B cell (primary cell): ENCODE measurements at regions of chr16 and their contacts with region 1.

Region 1: GRCh38 chr16:28211712-28212534 is at the start of gene XPO6:
- DNase-seq: peak; percentile 98
- ATAC-seq: peak; percentile 93
- H3K4me3 ChIP-seq: peak within 1 kb of the TSS; percentile 71 to 92 (median 82)
- H3K4me3 Mint-ChIP-seq: peak within 1 kb of the TSS; percentile 97
- H3K27ac ChIP-seq: peak within 1 kb of the TSS; percentile 60 to 74
- H3K27ac Mint-ChIP-seq: peak within 1 kb of the TSS; percentile 97
- H3K4me1 ChIP-seq: peaks cover 29 to 36% of the 10 kb centered on the region in 2 donors
- H3K4me1 Mint-ChIP-seq: peaks cover 31% of the 10 kb centered on the region
- H3K27me3 ChIP-seq: no peaks in the 10 kb centered on the region
- H3K27me3 Mint-ChIP-seq: no peaks in the 10 kb centered on the region
- CTCF ChIP-seq: no peak
- total RNA-seq, gene XPO6: 259 and 271 TPM in 2 replicates

Region 2: DNA sequence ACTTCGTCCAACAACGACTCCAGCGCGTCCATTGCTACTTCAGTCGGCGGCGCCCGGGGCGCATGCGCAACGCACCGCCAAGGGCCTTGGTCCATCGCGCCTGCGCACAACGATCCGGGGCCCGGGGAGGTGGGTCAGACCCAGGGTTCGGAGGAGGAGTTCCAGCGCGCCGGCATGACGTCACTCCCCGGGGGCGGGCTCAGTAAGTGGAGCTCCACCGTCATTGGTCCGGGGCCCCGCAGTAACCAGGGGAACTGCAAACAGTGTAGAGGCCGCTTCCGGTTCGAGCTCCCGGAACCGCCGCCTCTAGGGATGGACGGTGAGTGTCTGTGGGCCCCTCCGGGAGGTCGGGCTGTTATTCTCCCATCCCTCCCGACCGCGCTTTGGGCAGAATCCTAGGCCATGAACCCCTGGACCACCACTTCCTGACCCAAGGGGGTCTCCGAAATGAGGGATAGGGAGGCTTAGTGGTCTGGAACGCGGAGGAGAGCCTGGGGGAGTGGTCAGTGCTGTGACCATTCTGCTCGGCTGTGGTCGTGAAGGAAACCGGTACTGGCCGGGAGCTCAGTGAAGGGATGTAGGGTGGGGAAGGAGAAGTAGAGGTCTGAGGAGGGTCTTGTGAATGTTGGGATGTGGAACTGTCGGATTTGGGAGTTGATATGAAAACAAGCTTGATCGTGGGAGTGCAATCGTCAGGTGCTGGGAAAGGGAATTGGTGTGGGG is 661.9 kb before region 1 on chr16 and contains the starts of genes GTF3C1 and KATNIP:
- CTCF ChIA-PET with region 1: no interaction called
- POLR2A ChIA-PET with region 1: no interaction called
- intact Hi-C with region 1: loop called (anchors 10 kb)
- DNase-seq: peak; percentile 100
- ATAC-seq: peak; percentile 100
- H3K4me3 ChIP-seq: peak within 1 kb of the TSS; percentile 82 to 98 (median 95)
- H3K4me3 Mint-ChIP-seq: peak within 1 kb of the TSS; percentile 99
- H3K27ac ChIP-seq: peak within 1 kb of the TSS; percentile 80 to 99
- H3K27ac Mint-ChIP-seq: peak within 1 kb of the TSS; percentile 97
- H3K4me1 ChIP-seq: peaks cover 13 to 22% of the 10 kb centered on the region in 2 donors
- H3K4me1 Mint-ChIP-seq: peaks cover 33% of the 10 kb centered on the region
- H3K27me3 ChIP-seq: no peaks in the 10 kb centered on the region
- H3K27me3 Mint-ChIP-seq: no peaks in the 10 kb centered on the region
- CTCF ChIP-seq: no peak
- total RNA-seq, gene GTF3C1: 49.6 and 64.1 TPM in 2 replicates
- total RNA-seq, gene KATNIP: 49.9 and 56.0 TPM in 2 replicates

Region 3: DNA sequence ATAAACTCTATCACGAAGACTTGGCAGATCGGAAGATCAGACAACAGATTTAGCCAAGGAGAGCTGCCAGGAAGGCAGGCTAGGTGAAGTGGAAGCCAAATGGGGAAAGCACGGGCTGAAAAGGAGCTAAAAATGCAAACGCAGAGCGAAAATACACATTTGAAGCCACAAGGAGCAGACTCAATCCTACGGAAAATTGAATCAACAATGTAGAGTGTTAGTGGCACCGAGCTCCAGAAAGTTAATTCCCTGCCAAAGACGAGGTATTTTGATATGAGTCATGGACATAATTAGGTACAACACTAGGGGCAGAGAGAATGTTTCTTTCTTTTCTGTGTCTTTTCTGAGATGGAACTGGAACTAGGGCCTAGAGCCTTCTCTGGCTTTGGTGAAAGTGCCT is 169.1 kb before region 1 on chr16:
- CTCF ChIA-PET with region 1: no interaction called
- POLR2A ChIA-PET with region 1: no interaction called
- intact Hi-C with region 1: no loop called
- DNase-seq: no peak
- ATAC-seq: no peak
- H3K4me3 ChIP-seq: no peak overlapping the region
- H3K4me3 Mint-ChIP-seq: no peak overlapping the region
- H3K27ac ChIP-seq: no peak overlapping the region
- H3K27ac Mint-ChIP-seq: no peak overlapping the region
- H3K4me1 ChIP-seq: no peaks in the 10 kb centered on the region
- H3K4me1 Mint-ChIP-seq: no peaks in the 10 kb centered on the region
- H3K27me3 ChIP-seq: no peaks in the 10 kb centered on the region
- H3K27me3 Mint-ChIP-seq: peaks cover 25% of the 10 kb centered on the region
- CTCF ChIP-seq: no peak

Region 4: GRCh38 chr16:28172336-28172735 is 39.6 kb before region 1 on chr16:
- CTCF ChIA-PET with region 1: interaction called, 3 read pairs
- POLR2A ChIA-PET with region 1: no interaction called
- intact Hi-C with region 1: loop called (anchors 5 kb)
- DNase-seq: no peak
- ATAC-seq: no peak
- H3K4me3 ChIP-seq: no peak overlapping the region
- H3K4me3 Mint-ChIP-seq: no peak overlapping the region
- H3K27ac ChIP-seq: peak overlapping the region in 1 of 2 donors; percentile 3
- H3K27ac Mint-ChIP-seq: no peak overlapping the region
- H3K4me1 ChIP-seq: peaks cover 0 to 8% of the 10 kb centered on the region in 2 donors
- H3K4me1 Mint-ChIP-seq: peaks cover 40% of the 10 kb centered on the region
- H3K27me3 ChIP-seq: no peaks in the 10 kb centered on the region
- H3K27me3 Mint-ChIP-seq: no peaks in the 10 kb centered on the region
- CTCF ChIP-seq: no peak

Region 5: DNA sequence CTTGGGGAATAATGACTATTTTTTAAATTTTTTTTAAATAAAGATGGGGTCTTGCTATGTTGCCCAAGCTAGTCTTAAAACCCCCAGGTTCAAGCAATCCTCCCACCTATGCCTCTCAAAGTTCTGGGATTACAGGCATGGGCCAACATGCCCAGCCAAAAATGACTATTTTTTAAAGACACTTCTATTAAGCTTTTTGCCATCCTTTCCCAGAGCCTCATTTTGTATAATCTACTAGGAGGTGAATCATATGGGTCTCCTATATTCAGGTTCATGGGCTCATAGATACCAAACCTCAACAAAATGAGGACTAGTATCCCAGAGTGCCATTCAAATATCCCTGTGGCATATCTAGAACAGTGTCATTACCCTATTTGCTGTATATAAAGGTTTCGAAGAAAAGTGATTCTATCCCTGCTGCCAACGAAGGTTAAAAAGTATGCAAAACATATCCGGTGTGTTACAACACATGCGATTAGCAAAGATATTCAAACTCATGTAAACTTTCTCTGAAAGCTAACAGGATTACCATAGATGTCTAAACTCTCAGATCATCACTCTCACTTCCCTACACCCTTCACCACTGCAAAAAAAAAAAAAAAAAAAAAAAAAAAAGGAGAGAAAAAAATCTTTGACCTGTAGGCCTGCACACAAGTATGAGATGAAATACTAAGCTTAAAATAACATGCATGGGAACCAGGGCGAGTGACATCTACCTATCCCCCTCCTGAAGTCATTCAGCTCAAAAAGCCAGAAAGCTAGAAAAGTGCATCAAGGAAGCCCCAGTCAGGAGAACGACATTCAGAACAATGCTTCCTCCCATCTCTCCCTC is 23.6 kb before region 1 on chr16:
- CTCF ChIA-PET with region 1: interaction called, 13 read pairs
- POLR2A ChIA-PET with region 1: interaction called, 25 read pairs
- intact Hi-C with region 1: loop called (anchors 1 kb)
- DNase-seq: peak; percentile 82
- ATAC-seq: peak; percentile 71
- H3K4me3 ChIP-seq: peak overlapping the region; percentile 1 to 63 (median 41)
- H3K4me3 Mint-ChIP-seq: peak overlapping the region; percentile 76
- H3K27ac ChIP-seq: peak overlapping the region; percentile 92 to 93
- H3K27ac Mint-ChIP-seq: peak overlapping the region; percentile 86
- H3K4me1 ChIP-seq: peaks cover 76 to 82% of the 10 kb centered on the region in 2 donors
- H3K4me1 Mint-ChIP-seq: peaks cover 84% of the 10 kb centered on the region
- H3K27me3 ChIP-seq: no peaks in the 10 kb centered on the region
- H3K27me3 Mint-ChIP-seq: no peaks in the 10 kb centered on the region
- CTCF ChIP-seq: no peak

Region 6: DNA sequence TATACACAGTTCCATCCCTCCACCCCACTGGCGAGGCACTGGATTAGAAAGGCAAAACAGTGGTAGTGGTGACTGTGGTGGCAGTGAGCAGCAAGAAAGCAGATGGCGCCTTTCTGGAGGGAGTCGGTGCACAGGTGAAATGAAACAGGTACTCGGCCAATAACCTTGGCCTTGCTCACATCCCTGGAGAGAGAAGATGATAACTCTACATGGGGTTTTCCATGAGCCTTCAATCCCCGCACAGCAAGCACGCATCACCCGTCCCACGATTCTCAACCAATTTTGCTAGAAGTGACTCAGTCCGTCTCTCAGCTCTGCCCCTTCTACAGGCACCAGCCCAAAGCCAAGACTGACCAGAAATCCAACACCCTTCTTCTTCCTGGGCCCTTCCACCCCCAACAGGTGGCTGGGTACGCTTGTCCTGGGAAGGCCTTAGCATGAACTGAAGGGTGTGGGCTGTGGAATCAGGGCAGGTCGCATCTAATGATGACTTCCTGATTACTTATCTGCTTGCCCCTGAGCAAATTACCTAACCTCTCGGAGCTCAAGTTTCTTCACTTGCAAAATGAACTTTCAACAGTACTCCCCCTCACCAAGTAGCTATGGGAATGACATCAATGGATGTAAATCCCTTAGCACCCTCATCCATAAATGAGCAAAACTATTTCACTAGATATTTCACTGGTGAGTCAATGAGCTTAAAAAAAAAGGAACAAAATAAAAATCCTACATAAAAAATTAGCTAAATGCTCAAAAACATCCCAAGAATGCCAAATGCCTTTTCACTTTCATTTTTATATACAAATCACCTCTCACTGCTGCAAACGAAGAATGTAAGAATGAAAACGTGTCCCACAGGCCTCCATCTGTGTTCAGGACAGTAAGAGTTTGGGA is 18.1 kb before region 1 on chr16:
- CTCF ChIA-PET with region 1: interaction called, 20 read pairs
- POLR2A ChIA-PET with region 1: interaction called, 25 read pairs
- intact Hi-C with region 1: loop called (anchors 1 kb)
- DNase-seq: no peak
- ATAC-seq: no peak
- H3K4me3 ChIP-seq: peak overlapping the region in 4 of 5 experiments; percentile 6 to 66 (median 28)
- H3K4me3 Mint-ChIP-seq: peak overlapping the region; percentile 87
- H3K27ac ChIP-seq: peak overlapping the region; percentile 86 to 92
- H3K27ac Mint-ChIP-seq: peak overlapping the region; percentile 96
- H3K4me1 ChIP-seq: peaks cover 66 to 76% of the 10 kb centered on the region in 2 donors
- H3K4me1 Mint-ChIP-seq: peaks cover 78% of the 10 kb centered on the region
- H3K27me3 ChIP-seq: no peaks in the 10 kb centered on the region
- H3K27me3 Mint-ChIP-seq: no peaks in the 10 kb centered on the region
- CTCF ChIP-seq: no peak

Region 7: GRCh38 chr16:28291873-28292660 is 80.1 kb after region 1 on chr16 and contains the start of gene SBK1:
- CTCF ChIA-PET with region 1: no interaction called
- POLR2A ChIA-PET with region 1: interaction called, 3 read pairs
- intact Hi-C with region 1: loop called (anchors 1 kb)
- DNase-seq: peak; percentile 92
- ATAC-seq: peak; percentile 97
- H3K4me3 ChIP-seq: peak within 1 kb of the TSS; percentile 44 to 84 (median 65)
- H3K4me3 Mint-ChIP-seq: peak within 1 kb of the TSS; percentile 88
- H3K27ac ChIP-seq: peak within 1 kb of the TSS; percentile 11 to 52
- H3K27ac Mint-ChIP-seq: peak within 1 kb of the TSS; percentile 77
- H3K4me1 ChIP-seq: peaks cover 15 to 22% of the 10 kb centered on the region in 2 donors
- H3K4me1 Mint-ChIP-seq: peaks cover 15% of the 10 kb centered on the region
- H3K27me3 ChIP-seq: peaks cover 0 to 21% (median 10%) of the 10 kb centered on the region in 4 experiments
- H3K27me3 Mint-ChIP-seq: peaks cover 8% of the 10 kb centered on the region
- CTCF ChIP-seq: no peak
- total RNA-seq, gene SBK1: 1.2 and 1.3 TPM in 2 replicates